Activated CD4-positive, alpha-beta T cell treated with anti-CD3 and anti-CD28 coated beads, Interleukin-2, amount 10 ng/mL, durations not matched to agents 7 days and 5 days (primary cell): ENCODE measurements at regions of chr10 and their contacts with region 1.

Region 1: DNA sequence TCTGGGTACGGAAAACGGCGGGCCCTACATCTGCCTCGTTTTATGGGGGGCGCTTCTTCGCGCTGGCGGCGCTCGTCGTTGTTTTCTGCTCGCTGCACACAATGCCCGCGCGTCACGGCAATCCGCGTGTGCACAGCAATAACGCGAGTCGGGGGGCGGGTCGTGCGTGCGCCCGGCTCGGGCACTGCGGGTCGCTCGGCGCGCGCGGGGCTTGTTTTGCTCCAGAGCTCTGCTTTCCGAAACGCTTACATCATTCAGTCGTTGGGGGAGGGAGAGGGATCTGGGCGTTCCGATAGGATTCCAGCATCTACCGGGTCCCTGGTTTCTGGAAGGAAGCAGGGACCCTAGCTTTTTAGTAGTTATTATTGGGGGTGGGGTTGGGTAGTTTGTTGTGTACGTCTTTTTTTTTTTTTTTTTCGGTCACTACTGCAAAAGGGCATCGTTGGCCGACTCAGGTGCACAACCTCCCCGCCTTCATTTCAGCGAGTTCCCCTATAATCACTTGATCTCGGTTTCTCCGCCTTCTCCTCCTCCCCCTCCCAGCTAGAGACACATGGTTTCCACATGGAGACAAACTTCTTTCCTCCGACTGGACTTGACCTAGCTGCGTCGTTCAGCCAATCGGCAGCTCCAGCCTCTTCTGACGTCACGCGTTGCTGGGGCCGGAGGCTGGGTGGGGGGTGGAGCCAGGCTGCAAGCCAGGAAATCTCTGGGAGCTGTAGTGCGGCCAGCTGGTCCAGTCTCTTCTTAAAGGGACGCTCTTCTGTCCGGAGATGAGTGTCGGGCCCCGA is 3.5 kb downstream of the MXI1 start:
- DNase-seq: peak; percentile 93
- H3K4me3 Mint-ChIP-seq: peak overlapping the region; percentile 95
- H3K27ac Mint-ChIP-seq: peak overlapping the region; percentile 94
- H3K4me1 Mint-ChIP-seq: peaks cover 69% of the 10 kb centered on the region
- H3K27me3 Mint-ChIP-seq: peaks cover 11% of the 10 kb centered on the region

Region 2: DNA sequence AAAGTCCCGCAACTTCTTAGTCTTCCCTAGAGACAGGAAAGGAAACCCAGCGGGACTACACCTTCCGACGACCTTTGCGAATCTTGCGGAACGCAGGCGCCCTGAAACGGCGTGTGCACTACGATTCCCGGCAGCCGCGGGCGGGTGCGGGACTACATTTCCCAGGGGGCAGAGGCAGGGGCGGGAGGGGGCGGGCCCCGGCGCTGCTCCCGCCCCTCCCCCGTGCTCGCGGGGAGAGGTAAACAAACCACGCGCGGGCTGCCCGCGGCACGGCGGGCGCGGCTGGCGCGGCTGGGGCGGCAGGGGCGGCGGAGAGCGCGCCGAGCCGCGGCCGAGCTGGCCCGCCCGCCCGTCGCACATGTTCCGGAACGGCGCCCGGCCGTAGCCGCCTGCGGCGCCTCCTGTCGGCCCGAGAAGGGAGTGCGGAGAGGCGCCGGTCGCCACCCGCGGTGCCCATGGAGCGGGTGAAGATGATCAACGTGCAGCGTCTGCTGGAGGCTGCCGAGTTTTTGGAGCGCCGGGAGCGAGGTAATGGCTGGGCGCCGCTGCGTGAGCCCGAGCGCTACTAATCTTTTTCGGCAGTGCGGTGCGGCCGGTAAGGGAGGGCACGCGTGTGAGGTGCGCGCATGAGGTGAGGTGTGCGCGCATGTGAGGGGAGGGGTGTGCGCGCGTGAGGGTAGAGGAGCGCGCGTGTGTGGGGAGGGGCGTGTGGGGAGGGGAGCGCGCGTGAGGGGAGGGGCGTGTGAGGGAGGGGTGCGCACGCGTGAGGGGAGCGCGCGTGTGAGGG is 15.1 kb after region 1 on chr10:
- CTCF ChIA-PET with region 1: interaction called, 109 read pairs
- POLR2A ChIA-PET with region 1: interaction called, 4 read pairs
- DNase-seq: peak; percentile 90
- H3K4me3 Mint-ChIP-seq: peak overlapping the region; percentile 93
- H3K27ac Mint-ChIP-seq: peak overlapping the region; percentile 92
- H3K4me1 Mint-ChIP-seq: peaks cover 45% of the 10 kb centered on the region
- H3K27me3 Mint-ChIP-seq: no peaks in the 10 kb centered on the region